Tibial artery (tissue), 4 donors: ENCODE measurements at regions of chr17 and their contacts with region 1.

Region 1: GRCh38 chr17:76523084-76524037 is 14.1 kb downstream of the CYGB start:
- DNase-seq: no peak
- H3K4me3 ChIP-seq: no peak overlapping the region
- H3K27ac ChIP-seq: no peak overlapping the region
- H3K4me1 ChIP-seq: peaks cover 0 to 21% (median 10%) of the 10 kb centered on the region in 4 donors
- H3K27me3 ChIP-seq: peaks cover 0 to 48% of the 10 kb centered on the region in 2 donors
- CTCF ChIP-seq: peak; percentile 99 to 100

Region 2: DNA sequence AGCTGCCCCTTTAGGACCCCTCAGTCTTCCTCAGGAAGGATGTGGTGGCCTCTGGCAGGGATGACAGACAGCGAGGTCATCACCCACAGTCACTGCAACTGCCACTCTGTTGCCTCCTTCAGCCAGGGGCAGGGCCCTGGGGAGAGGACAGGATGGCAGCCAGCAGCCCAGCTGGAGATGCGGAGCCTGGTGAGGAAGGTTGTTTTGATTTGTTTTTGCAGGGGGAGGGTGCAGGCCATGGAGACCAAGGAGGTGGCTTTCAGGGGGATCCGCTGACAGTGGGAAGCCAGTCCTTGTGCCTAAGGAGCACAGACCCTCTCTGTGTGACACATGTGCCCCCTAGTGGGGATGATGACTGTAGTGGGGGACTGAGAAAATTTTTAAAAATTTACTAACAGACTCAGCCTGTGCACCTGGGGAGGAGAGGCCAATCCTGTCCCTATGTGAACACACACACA is 23.9 kb after region 1 on chr17:
- intact Hi-C with region 1: loop called (anchors 2 kb)
- DNase-seq: peak in 1 of 2 donors; percentile 70
- H3K4me3 ChIP-seq: no peak overlapping the region
- H3K27ac ChIP-seq: no peak overlapping the region
- H3K4me1 ChIP-seq: peaks cover 0 to 21% (median 0%) of the 10 kb centered on the region in 4 donors
- H3K27me3 ChIP-seq: peaks cover 0 to 41% of the 10 kb centered on the region in 2 donors
- CTCF ChIP-seq: peak; percentile 62 to 74

Region 3: DNA sequence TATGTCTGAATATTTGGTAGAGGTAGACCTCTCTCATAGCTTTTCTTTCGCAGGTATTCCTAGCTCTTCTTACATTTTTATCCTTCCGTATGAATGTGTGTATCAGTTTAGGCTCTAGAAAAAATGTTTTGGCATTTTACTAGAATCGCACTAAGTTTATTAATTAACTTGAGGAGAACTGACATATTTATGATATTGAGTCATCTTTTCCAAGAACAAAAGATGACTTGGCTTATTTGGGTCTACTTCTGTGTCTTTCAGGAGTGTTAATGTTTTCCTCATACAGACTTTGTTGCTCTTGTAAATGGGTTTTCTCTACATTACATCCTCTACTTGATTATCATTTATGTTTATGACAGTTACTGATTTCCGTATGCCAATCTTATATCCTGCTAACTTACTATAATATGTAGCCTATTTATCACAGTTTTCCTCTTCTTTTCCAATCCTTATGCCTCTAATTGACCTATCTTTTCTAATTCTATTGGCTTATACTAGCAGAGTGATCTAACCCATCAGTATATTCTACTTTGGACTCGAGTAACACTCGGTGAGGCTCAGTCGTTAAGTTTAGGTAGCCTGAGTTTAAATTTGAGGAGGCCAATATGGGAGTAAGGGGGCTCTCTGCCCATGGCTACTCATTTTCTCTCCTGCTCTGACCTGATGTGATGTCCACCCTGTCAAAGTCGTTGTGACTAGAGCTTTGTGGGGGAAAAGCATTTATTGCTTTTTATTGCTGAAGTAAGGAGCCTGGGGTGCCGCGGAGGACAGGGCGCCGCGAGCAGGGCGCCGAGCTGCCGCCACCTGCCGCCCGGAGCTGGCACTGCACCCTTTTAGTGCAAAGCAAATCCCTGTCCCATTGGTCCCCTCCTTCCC is 100.1 kb after region 1 on chr17:
- intact Hi-C with region 1: loop called (anchors 2 kb)
- DNase-seq: peak; percentile 57 to 77
- H3K4me3 ChIP-seq: no peak overlapping the region
- H3K27ac ChIP-seq: no peak overlapping the region
- H3K4me1 ChIP-seq: peaks cover 0 to 7% (median 0%) of the 10 kb centered on the region in 4 donors
- H3K27me3 ChIP-seq: peaks cover 0 to 33% of the 10 kb centered on the region in 2 donors
- CTCF ChIP-seq: peak; percentile 85 to 96